IMR-90 (cell line): ENCODE measurements at regions of chr4 and their contacts with region 1.

Region 1: GRCh38 chr4:123396307-123397143 is at the start of gene SPRY1:
- DNase-seq: peak; percentile 88
- ATAC-seq: peak; percentile 45
- H3K4me3 ChIP-seq: peak within 1 kb of the TSS; percentile 60
- H3K27ac ChIP-seq: peak within 1 kb of the TSS; percentile 95
- H3K4me1 ChIP-seq: no peaks in the 10 kb centered on the region
- H3K27me3 ChIP-seq: no peaks in the 10 kb centered on the region
- CTCF ChIP-seq: no peak
- POLR2A ChIP-seq: no peak
- RAD21 ChIP-seq: no peak; the same call in 1 of the 2 replicates
- total RNA-seq, gene SPRY1: 1.4 and 1.9 TPM in 2 replicates

Region 2: GRCh38 chr4:123350191-123350544 is 46.4 kb before region 1 on chr4:
- CTCF ChIA-PET with region 1: no interaction called
- POLR2A ChIA-PET with region 1: no interaction called
- dilution Hi-C with region 1: no loop called
- in situ Hi-C with region 1: no loop called
- intact Hi-C with region 1: no loop called
- DNase-seq: no peak
- ATAC-seq: no peak
- H3K4me3 ChIP-seq: no peak overlapping the region
- H3K27ac ChIP-seq: no peak overlapping the region
- H3K4me1 ChIP-seq: peaks cover 3% of the 10 kb centered on the region
- H3K27me3 ChIP-seq: no peaks in the 10 kb centered on the region
- CTCF ChIP-seq: no peak
- POLR2A ChIP-seq: no peak
- RAD21 ChIP-seq: no peak

Region 3: GRCh38 chr4:123505095-123506010 is 108.8 kb after region 1 on chr4:
- CTCF ChIA-PET with region 1: no interaction called
- POLR2A ChIA-PET with region 1: no interaction called
- dilution Hi-C with region 1: no loop called
- in situ Hi-C with region 1: no loop called
- intact Hi-C with region 1: loop called (anchors 2 kb)
- DNase-seq: peak; percentile 61
- ATAC-seq: peak; percentile 88
- H3K4me3 ChIP-seq: peak overlapping the region; percentile 45
- H3K27ac ChIP-seq: peak overlapping the region; percentile 42
- H3K4me1 ChIP-seq: no peaks in the 10 kb centered on the region; the same call in 1 of the 2 replicates
- H3K27me3 ChIP-seq: no peaks in the 10 kb centered on the region
- CTCF ChIP-seq: no peak
- POLR2A ChIP-seq: no peak
- RAD21 ChIP-seq: peak; percentile 4; the same call in 1 of the 2 replicates

Region 4: DNA sequence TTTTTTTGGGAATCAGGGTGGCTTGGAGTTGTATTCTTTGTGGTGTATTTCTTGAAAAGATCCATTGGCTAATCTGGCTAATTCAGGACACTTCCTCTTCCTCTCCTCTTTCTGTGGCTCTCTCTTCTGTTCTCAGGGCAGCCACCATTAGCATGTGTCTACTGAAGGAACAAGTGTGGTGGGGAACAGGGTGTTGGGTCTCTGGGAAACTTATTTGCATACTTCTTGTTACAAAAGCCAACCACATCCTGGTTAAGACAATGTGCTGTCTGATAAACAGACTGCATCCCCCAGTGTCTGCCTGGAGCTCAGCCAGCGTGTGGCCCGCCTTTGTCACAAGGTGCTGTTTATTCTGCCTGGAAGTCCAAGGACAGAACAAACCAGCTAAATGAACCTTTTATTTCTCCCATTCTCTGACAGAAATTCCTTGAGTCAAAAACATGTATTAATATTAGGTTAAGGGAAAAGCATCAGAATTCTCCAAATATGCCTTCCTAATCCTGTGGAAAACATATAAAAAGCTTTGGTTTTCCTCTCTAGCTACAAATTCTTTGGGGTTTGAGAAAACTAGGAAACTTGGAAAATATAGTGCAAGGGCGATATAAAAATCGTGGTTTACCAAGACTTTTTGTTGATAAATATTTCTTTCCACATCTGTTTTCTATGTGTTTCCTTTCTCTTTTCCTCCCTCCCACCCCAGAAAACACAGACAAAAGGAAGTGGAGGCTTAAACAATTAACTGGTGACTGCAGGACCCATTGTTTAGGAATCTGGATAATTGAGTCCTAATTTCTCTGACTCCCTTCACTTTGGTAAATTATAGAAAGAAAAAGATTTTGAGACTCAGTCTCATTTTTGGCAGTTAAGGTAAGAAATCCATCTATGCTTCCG is 203.6 kb after region 1 on chr4:
- CTCF ChIA-PET with region 1: no interaction called
- POLR2A ChIA-PET with region 1: no interaction called
- dilution Hi-C with region 1: no loop called
- in situ Hi-C with region 1: no loop called
- intact Hi-C with region 1: no loop called
- DNase-seq: peak; percentile 5
- ATAC-seq: no peak
- H3K4me3 ChIP-seq: no peak overlapping the region
- H3K27ac ChIP-seq: peak overlapping the region; percentile 17; the same call in 1 of the 2 replicates
- H3K4me1 ChIP-seq: peaks cover 3% of the 10 kb centered on the region; the same call in 1 of the 2 replicates
- H3K27me3 ChIP-seq: no peaks in the 10 kb centered on the region
- CTCF ChIP-seq: no peak
- POLR2A ChIP-seq: no peak
- RAD21 ChIP-seq: no peak

Region 5: GRCh38 chr4:123661080-123661737 is 264.7 kb after region 1 on chr4:
- CTCF ChIA-PET with region 1: interaction called, 11 read pairs
- POLR2A ChIA-PET with region 1: no interaction called
- dilution Hi-C with region 1: no loop called
- in situ Hi-C with region 1: no loop called
- intact Hi-C with region 1: loop called (anchors 2 kb)
- DNase-seq: peak; percentile 33
- ATAC-seq: peak; percentile 48; the same call in 1 of the 2 replicates
- H3K4me3 ChIP-seq: no peak overlapping the region
- H3K27ac ChIP-seq: no peak overlapping the region
- H3K4me1 ChIP-seq: no peaks in the 10 kb centered on the region
- H3K27me3 ChIP-seq: no peaks in the 10 kb centered on the region
- CTCF ChIP-seq: peak; percentile 64
- POLR2A ChIP-seq: no peak
- RAD21 ChIP-seq: peak; percentile 69

Region 6: GRCh38 chr4:123986268-123986798 is 589.8 kb after region 1 on chr4:
- CTCF ChIA-PET with region 1: no interaction called
- POLR2A ChIA-PET with region 1: no interaction called
- dilution Hi-C with region 1: no loop called
- in situ Hi-C with region 1: no loop called
- intact Hi-C with region 1: loop called (anchors 5 kb)
- DNase-seq: peak; percentile 92
- ATAC-seq: peak; percentile 90
- H3K4me3 ChIP-seq: peak overlapping the region; percentile 8; the same call in 1 of the 2 replicates
- H3K27ac ChIP-seq: peak overlapping the region; percentile 92
- H3K4me1 ChIP-seq: peaks cover 3% of the 10 kb centered on the region
- H3K27me3 ChIP-seq: no peaks in the 10 kb centered on the region
- CTCF ChIP-seq: no peak
- POLR2A ChIP-seq: no peak
- RAD21 ChIP-seq: no peak

Region 7: DNA sequence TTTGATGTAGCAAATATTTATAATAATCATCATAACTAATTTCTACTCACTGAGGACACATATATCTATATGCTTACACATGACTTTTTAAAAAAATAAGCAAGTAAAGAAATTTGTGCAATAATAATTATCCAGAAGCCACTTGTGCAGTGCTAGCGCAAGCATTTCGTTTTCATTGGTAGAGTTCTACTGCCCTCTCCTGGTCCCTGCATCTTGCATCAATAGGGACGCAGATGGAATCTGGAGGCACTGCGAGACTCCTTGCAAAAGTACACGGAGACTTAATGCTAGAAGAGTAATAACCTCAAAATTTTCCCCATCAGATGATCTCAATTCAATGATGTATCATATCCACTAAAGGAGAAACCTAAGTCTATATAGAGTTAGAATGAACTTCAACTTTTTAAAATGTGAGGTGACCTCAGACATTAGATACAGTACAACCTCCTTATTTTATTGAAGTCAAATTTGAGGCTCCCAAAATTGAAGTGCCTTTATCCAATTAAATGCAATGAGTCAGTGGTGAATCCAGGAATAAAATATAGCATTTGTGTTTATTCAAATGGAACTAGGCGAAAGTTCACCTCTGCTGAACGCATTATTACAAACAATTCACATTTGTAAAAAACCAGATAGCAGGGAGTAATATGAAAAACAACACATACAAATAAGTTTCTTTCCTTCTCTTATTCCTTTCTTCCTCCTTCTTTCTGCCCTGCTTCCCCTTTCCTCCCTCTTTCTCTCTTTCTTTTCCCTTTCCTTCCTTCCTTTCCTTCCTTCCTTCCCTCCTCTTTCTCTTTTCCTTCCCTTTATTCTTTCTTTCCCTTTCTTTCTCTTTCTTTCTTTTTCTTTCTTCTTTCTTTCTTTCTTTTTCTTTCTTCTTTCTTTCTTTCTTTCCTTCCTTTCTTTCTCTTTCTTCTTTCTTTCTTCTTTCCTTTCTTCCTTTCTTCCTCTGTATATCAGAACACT is 866.0 kb after region 1 on chr4:
- CTCF ChIA-PET with region 1: no interaction called
- POLR2A ChIA-PET with region 1: no interaction called
- dilution Hi-C with region 1: no loop called
- in situ Hi-C with region 1: no loop called
- intact Hi-C with region 1: loop called (anchors 1 kb)
- DNase-seq: peak; percentile 88
- ATAC-seq: peak; percentile 97
- H3K4me3 ChIP-seq: no peak overlapping the region
- H3K27ac ChIP-seq: no peak overlapping the region
- H3K4me1 ChIP-seq: no peaks in the 10 kb centered on the region
- H3K27me3 ChIP-seq: no peaks in the 10 kb centered on the region
- CTCF ChIP-seq: peak; percentile 91
- POLR2A ChIP-seq: no peak
- RAD21 ChIP-seq: peak; percentile 96